ENCODE measurements at regions of chr12 and their contacts with region 1.

Region 1: DNA sequence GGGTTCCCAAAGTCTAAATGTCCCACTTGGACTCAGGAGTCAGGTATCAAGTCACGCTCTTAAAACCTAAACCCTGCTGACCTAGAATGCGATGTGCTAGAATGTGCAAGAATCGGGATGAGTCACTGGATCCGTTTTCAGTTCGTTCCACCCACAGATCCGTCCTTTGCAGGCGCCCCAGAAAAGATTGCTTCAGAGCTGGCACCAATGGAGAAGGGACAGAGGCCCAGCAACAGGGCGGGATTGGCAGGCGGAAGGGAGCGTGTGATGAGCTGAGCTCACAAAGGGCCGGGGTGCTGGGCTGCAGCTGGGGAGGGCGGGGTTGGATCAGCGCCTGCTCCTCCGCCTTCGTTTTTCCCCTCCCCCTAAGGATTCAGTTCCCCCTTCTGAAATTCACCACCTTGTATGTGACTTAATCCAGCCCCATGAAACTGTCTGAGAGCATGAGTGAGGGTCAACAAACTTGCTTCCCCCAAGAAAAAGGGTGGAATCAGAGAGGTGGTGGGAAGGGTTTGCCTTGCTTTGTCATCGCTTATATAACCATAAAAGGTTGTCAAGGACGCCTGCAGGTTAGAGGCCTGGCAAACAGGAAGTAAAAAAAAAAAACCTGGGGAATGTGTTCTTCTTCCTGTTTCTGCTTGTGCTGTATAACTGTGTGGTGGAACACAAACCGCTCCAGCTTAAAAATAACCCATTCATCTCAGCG is 2.8 kb upstream of the UBC start:
- DNase-seq: peak; percentile 79 to 98 (median 91)
- ATAC-seq: peak; percentile 73
- H3K4me3 ChIP-seq: peak overlapping the region; percentile 31 to 40
- H3K4me3 Mint-ChIP-seq: peak overlapping the region; percentile 82
- H3K27ac ChIP-seq: peak overlapping the region; percentile 87 to 89
- H3K27ac Mint-ChIP-seq: peak overlapping the region; percentile 97
- H3K4me1 ChIP-seq: peaks cover 62% of the 10 kb centered on the region
- H3K4me1 Mint-ChIP-seq: peaks cover 87% of the 10 kb centered on the region
- H3K27me3 ChIP-seq: no peaks in the 10 kb centered on the region
- H3K27me3 Mint-ChIP-seq: no peaks in the 10 kb centered on the region
- CTCF ChIP-seq: no peak

Region 2: DNA sequence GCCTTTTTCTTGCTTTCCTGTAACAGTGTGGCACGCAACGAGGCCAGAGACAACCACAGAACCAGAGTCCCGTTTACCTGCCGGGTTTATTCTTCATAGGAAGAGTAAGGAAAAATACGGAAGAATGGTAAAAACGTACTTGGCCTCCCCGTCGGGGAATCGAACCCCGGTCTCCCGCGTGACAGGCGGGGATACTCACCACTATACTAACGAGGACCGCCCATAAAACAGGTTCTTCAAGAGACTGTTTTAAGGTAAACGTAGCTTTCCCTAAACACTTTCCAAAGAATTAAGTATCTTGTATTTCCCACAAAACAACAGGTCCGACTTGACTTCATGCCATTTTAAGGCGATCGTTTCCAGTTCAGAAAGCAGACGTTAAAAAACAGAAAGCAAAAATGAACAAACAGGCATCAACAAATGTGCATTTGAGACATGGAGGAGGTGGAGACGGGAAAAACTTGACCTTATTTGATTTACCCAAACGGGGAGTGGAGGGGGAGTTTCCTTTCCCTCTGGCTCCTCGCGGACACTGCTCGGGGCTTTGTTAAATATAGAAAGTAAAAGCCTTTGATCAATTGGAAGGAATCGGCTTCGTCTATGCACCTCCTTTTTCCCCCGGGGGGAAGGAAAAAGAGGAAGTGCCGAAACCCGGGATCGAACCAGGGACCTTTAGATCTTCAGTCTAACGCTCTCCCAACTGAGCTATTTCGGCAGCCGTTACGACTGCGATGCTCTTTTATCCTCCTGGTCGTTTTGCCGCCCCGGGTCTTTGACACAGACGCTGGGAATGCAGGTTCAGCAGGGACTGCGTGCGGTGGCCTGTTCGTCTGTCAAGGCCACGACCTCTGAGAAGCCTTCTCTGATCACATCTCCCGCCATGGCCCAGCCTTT is 10.2 kb after region 1 on chr12:
- CTCF ChIA-PET with region 1: interaction called, 22 read pairs
- POLR2A ChIA-PET with region 1: interaction called, 312 read pairs
- intact Hi-C with region 1: loop called in 1 of 2 experiments (anchors 1 kb)
- DNase-seq: peak; percentile 84 to 96 (median 91)
- ATAC-seq: peak; percentile 84
- H3K4me3 ChIP-seq: peak overlapping the region; percentile 71
- H3K4me3 Mint-ChIP-seq: peak overlapping the region; percentile 93
- H3K27ac ChIP-seq: peak overlapping the region; percentile 51 to 55
- H3K27ac Mint-ChIP-seq: peak overlapping the region; percentile 96
- H3K4me1 ChIP-seq: peaks cover 18% of the 10 kb centered on the region
- H3K4me1 Mint-ChIP-seq: peaks cover 22% of the 10 kb centered on the region
- H3K27me3 ChIP-seq: no peaks in the 10 kb centered on the region
- H3K27me3 Mint-ChIP-seq: no peaks in the 10 kb centered on the region
- CTCF ChIP-seq: no peak